OCI-LY7 (cell line): ENCODE measurements at regions of chr2 and their contacts with region 1.

Region 1: GRCh38 chr2:144703852-144704708 is 184.2 kb upstream of the ZEB2 start:
- DNase-seq: peak; percentile 97
- H3K4me3 ChIP-seq: peak overlapping the region; percentile 51
- H3K27ac ChIP-seq: peak overlapping the region; percentile 98
- H3K4me1 ChIP-seq: peaks cover 58% of the 10 kb centered on the region
- CTCF ChIP-seq: no peak

Region 2: DNA sequence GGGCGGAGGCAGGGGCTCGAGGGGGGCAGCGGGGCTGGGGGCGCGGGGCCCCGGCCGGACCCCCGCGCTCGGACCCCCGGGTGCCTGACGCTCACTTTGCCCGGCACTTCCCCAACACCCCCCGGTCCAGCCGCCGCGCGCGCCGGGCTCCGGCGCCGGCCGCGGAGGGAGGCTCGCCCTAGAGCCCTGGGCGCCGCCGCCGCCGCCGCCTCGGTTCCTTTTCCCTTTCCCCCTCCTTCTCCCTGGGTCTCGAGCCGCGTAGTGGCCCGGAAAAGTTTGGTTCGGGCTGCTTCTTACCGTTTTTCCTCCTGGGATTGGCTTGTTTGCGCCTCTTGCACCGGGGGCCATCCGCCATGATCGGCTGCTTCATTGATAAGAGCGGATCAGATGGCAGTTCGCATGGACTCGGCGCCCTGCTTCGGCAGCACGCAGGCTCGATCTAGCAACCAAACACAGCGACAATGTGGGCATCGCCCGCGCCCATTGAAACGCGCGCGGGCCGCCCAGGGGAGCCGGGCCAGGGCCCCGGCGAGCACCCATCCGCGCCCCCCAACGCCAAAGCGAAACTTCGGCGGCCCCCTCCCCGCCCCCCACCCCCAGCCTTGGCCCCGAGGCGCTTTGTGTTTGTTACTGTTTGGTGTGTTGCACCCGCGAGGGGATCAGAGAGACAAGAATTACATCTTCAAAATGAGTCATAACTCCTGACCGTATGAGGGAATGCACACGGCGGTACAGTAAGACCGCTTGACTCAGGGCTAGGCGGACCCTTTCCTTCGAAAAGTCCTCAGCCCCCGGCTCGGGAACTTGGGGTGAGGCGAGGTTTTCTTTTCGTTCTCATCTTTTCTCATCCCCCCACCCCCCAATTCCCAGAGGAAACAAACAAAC is 186.9 kb before region 1 on chr2:
- CTCF ChIA-PET with region 1: no interaction called
- POLR2A ChIA-PET with region 1: no interaction called
- intact Hi-C with region 1: loop called (anchors 2 kb)
- DNase-seq: peak; percentile 64
- H3K4me3 ChIP-seq: peak overlapping the region; percentile 83
- H3K27ac ChIP-seq: no peak overlapping the region
- H3K4me1 ChIP-seq: peaks cover 36% of the 10 kb centered on the region
- CTCF ChIP-seq: no peak

Region 3: GRCh38 chr2:144596073-144596871 is 107.8 kb before region 1 on chr2:
- CTCF ChIA-PET with region 1: no interaction called
- POLR2A ChIA-PET with region 1: interaction called, 4 read pairs
- intact Hi-C with region 1: loop called (anchors 5 kb)
- DNase-seq: peak; percentile 74
- H3K4me3 ChIP-seq: peak overlapping the region; percentile 59
- H3K27ac ChIP-seq: peak overlapping the region; percentile 57
- H3K4me1 ChIP-seq: peaks cover 37% of the 10 kb centered on the region
- CTCF ChIP-seq: no peak

Region 4: DNA sequence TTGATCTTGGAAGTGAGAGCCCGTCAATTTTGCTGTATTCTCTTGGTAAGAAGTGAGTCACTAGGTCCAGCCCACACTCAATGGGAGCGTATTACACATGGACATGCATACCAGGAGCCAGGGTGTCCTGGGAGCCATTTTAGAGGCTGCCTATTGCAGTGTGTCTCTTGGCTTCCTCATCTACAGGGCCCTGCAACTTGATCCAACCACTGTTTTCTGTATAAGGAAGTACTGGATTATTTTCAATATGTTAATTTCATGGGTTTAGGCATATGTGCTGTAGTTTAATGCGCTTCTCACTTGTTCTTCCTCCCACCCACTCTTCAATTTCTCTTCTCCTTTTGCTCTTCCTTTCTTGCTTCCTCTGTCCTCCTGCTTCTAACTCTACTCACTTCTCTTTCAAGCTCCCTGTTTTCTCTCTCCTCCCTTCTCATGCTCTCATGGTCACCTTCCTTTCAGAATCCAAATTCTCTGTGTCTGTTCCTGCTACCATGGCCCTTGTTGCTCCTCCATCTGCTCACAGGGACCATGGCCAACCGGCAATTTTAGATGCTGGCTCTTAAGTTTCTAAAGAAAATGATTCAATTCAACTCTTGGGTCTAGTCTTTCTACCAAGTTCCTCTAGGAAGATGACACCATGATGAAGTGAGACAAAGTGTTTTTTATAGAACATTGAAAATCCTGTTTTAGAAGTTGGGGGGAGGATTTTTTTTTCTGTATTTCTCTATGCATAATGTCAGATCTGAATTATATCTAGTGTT is 32.2 kb before region 1 on chr2:
- CTCF ChIA-PET with region 1: no interaction called
- POLR2A ChIA-PET with region 1: interaction called, 6 read pairs
- intact Hi-C with region 1: loop called (anchors 1 kb)
- DNase-seq: no peak
- H3K4me3 ChIP-seq: no peak overlapping the region
- H3K27ac ChIP-seq: peak overlapping the region; percentile 7
- H3K4me1 ChIP-seq: peaks cover 50% of the 10 kb centered on the region
- CTCF ChIP-seq: no peak

Region 5: GRCh38 chr2:145228506-145228905 is 524.4 kb after region 1 on chr2:
- CTCF ChIA-PET with region 1: no interaction called
- POLR2A ChIA-PET with region 1: no interaction called
- intact Hi-C with region 1: loop called (anchors 10 kb)
- DNase-seq: no peak
- H3K4me3 ChIP-seq: no peak overlapping the region
- H3K27ac ChIP-seq: no peak overlapping the region
- H3K4me1 ChIP-seq: no peaks in the 10 kb centered on the region
- CTCF ChIP-seq: no peak

Region 6: DNA sequence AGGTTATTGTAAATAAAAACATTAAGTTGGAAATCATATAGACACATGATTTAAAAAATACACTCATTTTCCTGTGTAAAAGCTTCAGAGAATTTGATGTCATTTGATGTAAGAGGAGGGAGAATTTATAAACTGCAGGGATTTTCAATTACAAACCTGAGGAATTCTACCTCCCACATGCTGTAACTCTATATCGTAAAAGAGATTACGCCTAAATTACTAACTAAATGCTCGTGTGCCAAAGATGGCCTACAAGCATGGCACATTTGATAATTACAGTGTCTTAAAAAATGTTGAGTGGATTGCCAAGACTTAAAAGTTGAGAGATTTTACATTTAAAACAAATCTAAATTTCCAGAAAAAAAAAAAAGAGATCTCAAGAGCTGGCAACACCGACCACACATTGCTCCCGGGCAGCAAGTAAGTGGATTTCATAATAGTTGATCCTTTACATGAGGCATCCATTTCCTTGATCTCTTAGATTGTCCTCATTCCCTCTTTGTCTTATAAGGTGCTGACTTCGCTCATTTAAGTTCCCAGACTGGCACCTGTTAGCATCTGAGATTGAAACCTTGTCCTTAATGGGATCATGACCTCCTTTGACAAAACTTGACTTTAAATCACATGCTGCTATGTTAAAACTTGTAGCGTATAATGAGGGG is 656.2 kb after region 1 on chr2:
- CTCF ChIA-PET with region 1: no interaction called
- POLR2A ChIA-PET with region 1: no interaction called
- intact Hi-C with region 1: no loop called
- DNase-seq: no peak
- H3K4me3 ChIP-seq: no peak overlapping the region
- H3K27ac ChIP-seq: no peak overlapping the region
- H3K4me1 ChIP-seq: no peaks in the 10 kb centered on the region
- CTCF ChIP-seq: no peak